ENCODE measurements at regions of chr2 and their contacts with region 1.

Region 1: GRCh38 chr2:58448065-58448507 is 207.0 kb upstream of the FANCL start:
- DNase-seq: peak; percentile 68
- H3K4me3 Mint-ChIP-seq: no peak overlapping the region
- H3K27ac Mint-ChIP-seq: no peak overlapping the region
- H3K4me1 Mint-ChIP-seq: no peaks in the 10 kb centered on the region
- H3K27me3 Mint-ChIP-seq: peaks cover 8% of the 10 kb centered on the region

Region 2: DNA sequence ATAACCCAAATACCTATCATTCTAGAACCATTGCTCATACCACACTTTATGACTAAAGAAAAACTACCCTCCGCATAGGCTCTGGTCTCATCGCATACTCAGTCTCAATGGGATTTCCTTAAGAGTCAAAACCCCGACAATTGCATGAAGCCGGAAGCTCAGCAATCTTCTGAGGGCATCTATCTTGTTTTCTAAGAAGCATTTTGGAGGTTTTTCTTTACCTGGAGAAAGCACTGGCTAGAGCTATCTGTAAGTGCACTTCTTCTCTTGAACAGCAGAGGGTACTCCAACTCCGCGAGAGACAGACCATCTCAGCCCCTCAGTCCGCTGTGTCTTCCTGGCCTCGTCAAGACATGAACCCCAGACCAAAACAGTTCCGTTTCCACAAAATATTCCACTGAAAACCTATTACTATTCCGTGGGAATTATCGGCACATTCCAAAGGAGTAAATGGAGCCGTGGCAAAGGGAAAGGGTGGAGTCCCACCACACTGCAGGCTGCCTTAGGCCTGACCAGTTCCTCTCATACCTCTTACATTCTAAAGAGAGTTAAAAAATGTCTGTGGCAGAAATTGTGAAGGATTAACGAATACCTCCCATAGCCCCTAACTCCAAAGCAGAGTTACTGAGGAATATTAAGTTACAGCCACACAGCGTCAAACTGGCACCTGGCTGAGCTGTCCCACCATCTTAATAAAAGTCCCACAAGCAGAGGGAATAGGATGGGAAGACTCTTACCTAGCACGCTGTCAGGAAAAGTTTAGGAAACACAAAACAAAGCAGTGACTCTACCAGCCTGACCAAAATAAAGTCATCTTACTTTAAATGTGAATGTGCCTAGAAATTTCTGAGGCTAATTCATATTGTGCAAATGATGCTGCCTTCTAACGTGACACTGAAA is 727.1 kb before region 1 on chr2:
- CTCF ChIA-PET with region 1: no interaction called
- intact Hi-C with region 1: loop called (anchors 1 kb)
- DNase-seq: peak; percentile 54
- H3K4me3 Mint-ChIP-seq: peak overlapping the region; percentile 39
- H3K27ac Mint-ChIP-seq: no peak overlapping the region
- H3K4me1 Mint-ChIP-seq: peaks cover 8% of the 10 kb centered on the region
- H3K27me3 Mint-ChIP-seq: peaks cover 5% of the 10 kb centered on the region

Region 3: DNA sequence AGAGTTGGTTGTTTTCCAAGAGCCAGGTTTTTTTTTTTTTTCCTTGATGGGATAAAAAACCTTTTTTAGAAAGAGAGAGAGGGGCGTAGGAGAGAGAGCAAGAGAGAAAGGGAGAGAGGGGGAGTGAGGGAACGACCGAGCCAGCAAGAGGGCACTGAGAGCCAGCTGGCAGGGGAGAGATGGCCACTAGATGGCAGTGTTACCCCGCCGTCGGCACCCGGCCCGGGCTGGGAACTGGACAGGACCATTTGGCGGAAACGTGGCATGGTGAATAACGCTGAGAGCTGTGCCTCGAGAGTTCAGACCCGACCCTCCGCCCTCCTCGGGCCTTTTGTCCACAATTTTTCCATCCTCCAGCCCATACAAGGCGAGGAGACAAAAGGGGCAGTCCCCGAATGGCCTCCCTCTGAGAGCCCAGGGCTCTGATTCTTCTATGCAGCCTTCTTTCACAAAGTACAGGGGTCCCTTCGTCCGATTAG is 688.2 kb before region 1 on chr2:
- CTCF ChIA-PET with region 1: interaction called, 4 read pairs
- intact Hi-C with region 1: loop called (anchors 1 kb)
- DNase-seq: peak; percentile 79
- H3K4me3 Mint-ChIP-seq: no peak overlapping the region
- H3K27ac Mint-ChIP-seq: no peak overlapping the region
- H3K4me1 Mint-ChIP-seq: peaks cover 3% of the 10 kb centered on the region
- H3K27me3 Mint-ChIP-seq: peaks cover 2% of the 10 kb centered on the region

Region 4: GRCh38 chr2:58131191-58132011 is 316.7 kb before region 1 on chr2:
- CTCF ChIA-PET with region 1: interaction called, 3 read pairs
- intact Hi-C with region 1: loop called (anchors 1 kb)
- DNase-seq: no peak
- H3K4me3 Mint-ChIP-seq: no peak overlapping the region
- H3K27ac Mint-ChIP-seq: no peak overlapping the region
- H3K4me1 Mint-ChIP-seq: no peaks in the 10 kb centered on the region
- H3K27me3 Mint-ChIP-seq: no peaks in the 10 kb centered on the region

Region 5: DNA sequence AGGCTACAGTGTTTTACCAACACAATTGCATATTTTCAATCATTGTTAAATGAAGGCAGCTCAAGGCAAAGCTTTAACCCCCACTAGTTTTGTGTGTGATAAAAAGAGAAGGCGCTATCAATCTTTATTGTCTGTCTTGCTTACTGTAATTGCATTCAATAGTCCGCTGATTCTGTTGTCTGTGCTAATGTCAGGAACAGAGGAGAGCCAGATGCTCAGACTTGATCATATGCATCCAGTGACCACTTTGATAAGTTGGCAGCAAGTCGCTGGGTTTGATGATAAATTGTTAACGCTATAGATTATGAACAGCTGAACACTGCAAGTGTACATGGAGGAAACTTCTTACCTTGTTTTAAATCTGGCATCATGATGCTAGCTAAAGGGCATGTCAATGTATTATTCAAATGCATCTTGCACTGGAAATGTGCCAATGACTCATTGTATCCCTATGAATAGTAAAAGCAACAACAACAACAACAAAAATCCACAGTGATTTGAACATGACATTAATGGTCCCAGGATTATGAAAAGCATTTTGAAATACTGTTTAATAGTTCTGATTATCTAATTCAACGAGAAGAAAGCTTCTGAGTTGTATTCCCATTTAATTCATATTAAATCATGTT is 216.6 kb after region 1 on chr2:
- CTCF ChIA-PET with region 1: no interaction called
- intact Hi-C with region 1: no loop called
- DNase-seq: no peak
- H3K4me3 Mint-ChIP-seq: no peak overlapping the region
- H3K27ac Mint-ChIP-seq: no peak overlapping the region
- H3K4me1 Mint-ChIP-seq: no peaks in the 10 kb centered on the region
- H3K27me3 Mint-ChIP-seq: no peaks in the 10 kb centered on the region

Region 6: DNA sequence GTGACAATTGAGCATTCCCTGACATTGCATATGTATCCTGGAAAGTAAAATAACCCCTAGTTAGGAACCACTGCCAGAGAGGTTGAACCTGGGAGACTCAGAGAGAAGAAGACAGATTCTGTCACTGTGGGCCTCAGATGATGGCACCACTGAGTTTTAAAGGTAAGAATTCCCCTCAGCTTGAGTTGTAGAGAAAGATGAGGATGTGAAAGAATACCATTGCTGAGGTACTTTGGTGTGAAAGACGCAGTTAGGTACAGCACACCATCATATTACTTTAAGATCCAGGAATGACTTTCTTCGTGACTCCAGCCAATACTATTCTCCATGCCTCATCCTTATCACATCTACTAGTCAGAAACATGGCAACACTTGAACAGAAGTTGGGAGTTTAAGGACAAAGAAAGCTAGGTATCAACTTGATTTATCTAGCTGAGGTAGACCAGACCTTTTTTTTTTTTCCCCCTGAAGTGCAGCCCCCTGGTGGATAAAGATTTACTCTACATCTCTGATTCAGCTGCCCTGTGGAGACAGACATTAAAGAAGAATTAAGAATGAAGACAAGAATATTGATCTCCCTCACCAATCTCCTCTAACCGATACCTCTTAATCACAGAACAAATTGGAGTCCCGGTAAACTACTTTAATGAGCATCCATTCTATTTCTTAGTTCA is 423.5 kb after region 1 on chr2:
- CTCF ChIA-PET with region 1: no interaction called
- intact Hi-C with region 1: no loop called
- DNase-seq: no peak
- H3K4me3 Mint-ChIP-seq: no peak overlapping the region
- H3K27ac Mint-ChIP-seq: no peak overlapping the region
- H3K4me1 Mint-ChIP-seq: no peaks in the 10 kb centered on the region
- H3K27me3 Mint-ChIP-seq: no peaks in the 10 kb centered on the region